CD8-positive, alpha-beta T cell (primary cell): ENCODE measurements at regions of chr7 and their contacts with region 1.

Region 1: GRCh38 chr7:3042861-3043489 is 692 bp downstream of the CARD11 start:
- DNase-seq: peak; percentile 20 to 82 (median 73)
- ATAC-seq: peak; percentile 61
- H3K4me3 ChIP-seq: peak overlapping the region; percentile 84 to 96
- H3K4me3 Mint-ChIP-seq: peak overlapping the region; percentile 92
- H3K27ac ChIP-seq: peak overlapping the region; percentile 84 to 88
- H3K27ac Mint-ChIP-seq: peak overlapping the region; percentile 94
- H3K4me1 ChIP-seq: peaks cover 49% of the 10 kb centered on the region
- H3K4me1 Mint-ChIP-seq: peaks cover 59% of the 10 kb centered on the region
- H3K27me3 ChIP-seq: no peaks in the 10 kb centered on the region
- H3K27me3 Mint-ChIP-seq: no peaks in the 10 kb centered on the region
- CTCF ChIP-seq: no peak

Region 2: DNA sequence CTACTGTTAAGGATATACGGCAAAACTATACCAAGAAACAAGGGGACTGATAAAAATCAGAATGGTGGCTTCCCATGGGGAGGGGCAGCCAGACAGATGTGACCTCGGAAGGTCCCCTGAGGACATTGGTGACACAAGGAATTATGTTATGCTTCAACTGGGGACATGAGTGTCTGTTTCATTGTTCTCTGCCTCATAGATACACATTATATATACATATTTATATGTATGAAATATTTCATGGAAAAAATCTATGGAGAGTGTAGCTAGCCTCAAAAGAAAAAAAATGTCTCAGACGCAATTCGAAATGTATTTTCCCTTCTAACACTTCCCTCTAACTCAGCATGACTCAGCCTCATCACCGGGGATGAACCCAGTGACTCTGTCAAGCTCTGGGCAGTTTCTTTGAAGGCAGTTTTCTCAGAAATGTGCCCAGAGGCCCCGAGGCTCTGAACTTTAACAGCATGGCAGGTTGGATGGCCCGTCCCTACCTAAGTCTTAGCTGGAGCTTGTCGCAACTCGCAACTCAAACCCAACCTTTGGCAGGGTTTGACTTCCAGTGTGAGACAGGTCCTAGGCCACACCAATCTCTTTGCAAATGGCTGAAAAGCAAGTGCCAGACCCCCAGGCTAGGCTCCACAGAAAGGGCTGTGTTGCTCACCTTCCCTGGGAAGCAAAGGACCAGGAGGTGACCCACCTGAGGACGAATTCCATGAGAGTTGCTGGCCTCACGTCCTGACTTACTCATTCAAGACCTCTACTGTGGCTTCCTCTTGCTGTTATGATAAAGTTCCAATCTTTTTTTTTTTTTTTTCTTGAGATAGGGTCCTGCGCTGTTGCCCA is 86.2 kb before region 1 on chr7:
- CTCF ChIA-PET with region 1: interaction called, 3 read pairs
- POLR2A ChIA-PET with region 1: no interaction called
- intact Hi-C with region 1: loop called in 1 of 2 experiments (anchors 1 kb)
- DNase-seq: peak in 4 of 9 experiments; percentile 20 to 57 (median 43)
- ATAC-seq: peak; percentile 33
- H3K4me3 ChIP-seq: no peak overlapping the region
- H3K4me3 Mint-ChIP-seq: no peak overlapping the region
- H3K27ac ChIP-seq: peak overlapping the region; percentile 10 to 60
- H3K27ac Mint-ChIP-seq: peak overlapping the region; percentile 72
- H3K4me1 ChIP-seq: peaks cover 53% of the 10 kb centered on the region
- H3K4me1 Mint-ChIP-seq: peaks cover 63% of the 10 kb centered on the region
- H3K27me3 ChIP-seq: no peaks in the 10 kb centered on the region
- H3K27me3 Mint-ChIP-seq: no peaks in the 10 kb centered on the region
- CTCF ChIP-seq: no peak

Region 3: GRCh38 chr7:2978403-2978802 is 64.6 kb before region 1 on chr7:
- CTCF ChIA-PET with region 1: no interaction called
- POLR2A ChIA-PET with region 1: interaction called, 5 read pairs
- intact Hi-C with region 1: loop called (anchors 2 kb)
- DNase-seq: peak; percentile 19 to 90 (median 71)
- ATAC-seq: peak; percentile 62
- H3K4me3 ChIP-seq: peak overlapping the region; percentile 40
- H3K4me3 Mint-ChIP-seq: peak overlapping the region; percentile 85
- H3K27ac ChIP-seq: peak overlapping the region; percentile 34 to 81
- H3K27ac Mint-ChIP-seq: peak overlapping the region; percentile 95
- H3K4me1 ChIP-seq: peaks cover 60% of the 10 kb centered on the region
- H3K4me1 Mint-ChIP-seq: peaks cover 70% of the 10 kb centered on the region
- H3K27me3 ChIP-seq: no peaks in the 10 kb centered on the region
- H3K27me3 Mint-ChIP-seq: no peaks in the 10 kb centered on the region
- CTCF ChIP-seq: no peak

Region 4: DNA sequence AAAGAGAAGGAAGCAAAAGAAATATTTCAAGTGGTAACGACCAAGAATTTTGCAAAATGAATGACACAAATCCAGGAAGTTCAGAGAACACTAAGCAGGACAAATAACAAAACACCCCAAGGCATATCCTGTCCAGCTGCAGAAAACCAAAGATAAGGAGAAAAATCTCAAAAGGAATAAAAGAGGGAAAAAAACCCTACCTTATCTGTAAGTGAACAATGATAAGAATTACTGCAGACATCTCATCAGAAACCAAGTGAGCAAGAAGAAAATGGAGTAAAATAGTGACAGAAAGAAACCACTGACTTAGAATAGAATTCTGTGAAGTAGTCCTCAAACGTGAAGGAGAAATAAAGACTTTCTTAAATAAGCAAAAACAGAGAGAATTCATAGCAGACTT is 21.1 kb before region 1 on chr7:
- CTCF ChIA-PET with region 1: no interaction called
- POLR2A ChIA-PET with region 1: no interaction called
- intact Hi-C with region 1: loop called in 1 of 2 experiments (anchors 2 kb)
- DNase-seq: no peak
- ATAC-seq: no peak
- H3K4me3 ChIP-seq: no peak overlapping the region
- H3K4me3 Mint-ChIP-seq: no peak overlapping the region
- H3K27ac ChIP-seq: no peak overlapping the region
- H3K27ac Mint-ChIP-seq: peak overlapping the region; percentile 53
- H3K4me1 ChIP-seq: no peaks in the 10 kb centered on the region
- H3K4me1 Mint-ChIP-seq: peaks cover 49% of the 10 kb centered on the region
- H3K27me3 ChIP-seq: no peaks in the 10 kb centered on the region
- H3K27me3 Mint-ChIP-seq: no peaks in the 10 kb centered on the region
- CTCF ChIP-seq: no peak

Region 5: GRCh38 chr7:3056234-3057065 is 13.5 kb after region 1 on chr7:
- CTCF ChIA-PET with region 1: interaction called, 11 read pairs
- POLR2A ChIA-PET with region 1: interaction called, 3 read pairs
- intact Hi-C with region 1: no loop called
- DNase-seq: no peak
- ATAC-seq: no peak
- H3K4me3 ChIP-seq: no peak overlapping the region
- H3K4me3 Mint-ChIP-seq: no peak overlapping the region
- H3K27ac ChIP-seq: no peak overlapping the region
- H3K27ac Mint-ChIP-seq: no peak overlapping the region
- H3K4me1 ChIP-seq: no peaks in the 10 kb centered on the region
- H3K4me1 Mint-ChIP-seq: no peaks in the 10 kb centered on the region
- H3K27me3 ChIP-seq: no peaks in the 10 kb centered on the region
- H3K27me3 Mint-ChIP-seq: no peaks in the 10 kb centered on the region
- CTCF ChIP-seq: no peak

Region 6: GRCh38 chr7:3092468-3092867 is 49.5 kb after region 1 on chr7:
- CTCF ChIA-PET with region 1: interaction called, 4 read pairs
- POLR2A ChIA-PET with region 1: no interaction called
- intact Hi-C with region 1: loop called (anchors 2 kb)
- DNase-seq: peak; percentile 33 to 94 (median 73)
- ATAC-seq: peak; percentile 82
- H3K4me3 ChIP-seq: peak overlapping the region; percentile 15 to 31
- H3K4me3 Mint-ChIP-seq: peak overlapping the region; percentile 55
- H3K27ac ChIP-seq: peak overlapping the region; percentile 56 to 96
- H3K27ac Mint-ChIP-seq: peak overlapping the region; percentile 96
- H3K4me1 ChIP-seq: peaks cover 74% of the 10 kb centered on the region
- H3K4me1 Mint-ChIP-seq: peaks cover 74% of the 10 kb centered on the region
- H3K27me3 ChIP-seq: no peaks in the 10 kb centered on the region
- H3K27me3 Mint-ChIP-seq: no peaks in the 10 kb centered on the region
- CTCF ChIP-seq: no peak

Region 7: DNA sequence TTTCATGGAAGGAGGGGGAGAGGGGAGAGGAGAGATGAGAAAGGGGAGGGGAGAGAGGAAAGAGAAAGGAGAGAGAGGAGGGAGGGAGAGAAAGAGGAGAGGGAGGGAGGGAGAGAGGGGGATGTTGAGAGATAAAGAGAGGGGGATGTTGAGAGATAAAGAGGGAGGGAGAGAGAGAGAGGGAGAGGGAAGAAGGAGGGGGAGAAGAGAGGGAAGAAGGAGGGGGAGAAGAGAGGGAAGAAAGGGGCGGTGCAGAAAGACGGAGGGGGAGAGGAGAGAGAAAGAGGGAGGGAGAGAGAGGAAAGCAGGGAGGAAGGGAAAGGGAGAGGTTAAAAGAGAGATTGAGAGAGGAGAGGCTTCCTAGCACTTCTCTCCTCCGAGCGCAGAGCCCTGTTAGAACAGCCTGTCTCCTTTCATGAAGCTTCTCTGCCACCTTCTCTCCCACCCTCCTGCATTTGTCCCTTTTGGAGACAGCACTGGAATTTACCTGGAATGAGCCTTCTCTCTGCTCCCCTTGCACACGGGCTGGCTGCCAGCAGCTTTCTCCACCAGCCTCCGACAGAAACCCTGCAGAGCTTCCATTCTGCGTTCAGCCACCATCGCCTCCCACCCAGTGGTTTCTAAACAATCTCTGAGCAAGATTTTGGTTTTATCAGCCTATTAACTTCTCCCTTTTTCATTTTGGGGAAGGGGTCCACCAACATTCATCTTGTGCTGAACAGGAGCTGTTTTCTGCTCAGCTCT is 74.7 kb after region 1 on chr7:
- CTCF ChIA-PET with region 1: no interaction called
- POLR2A ChIA-PET with region 1: interaction called, 3 read pairs
- intact Hi-C with region 1: loop called in 1 of 2 experiments (anchors 5 kb)
- DNase-seq: peak in 4 of 9 experiments; percentile 35 to 69 (median 51)
- ATAC-seq: peak; percentile 54
- H3K4me3 ChIP-seq: peak overlapping the region in 1 of 2 experiments; percentile 40
- H3K4me3 Mint-ChIP-seq: peak overlapping the region; percentile 90
- H3K27ac ChIP-seq: peak overlapping the region in 1 of 2 experiments; percentile 4
- H3K27ac Mint-ChIP-seq: peak overlapping the region; percentile 97
- H3K4me1 ChIP-seq: peaks cover 61% of the 10 kb centered on the region
- H3K4me1 Mint-ChIP-seq: peaks cover 79% of the 10 kb centered on the region
- H3K27me3 ChIP-seq: no peaks in the 10 kb centered on the region
- H3K27me3 Mint-ChIP-seq: no peaks in the 10 kb centered on the region
- CTCF ChIP-seq: no peak

Region 8: GRCh38 chr7:4797858-4798705 is 1755.1 kb after region 1 on chr7:
- CTCF ChIA-PET with region 1: no interaction called
- POLR2A ChIA-PET with region 1: no interaction called
- intact Hi-C with region 1: no loop called
- DNase-seq: peak; percentile 27 to 76 (median 59)
- ATAC-seq: peak; percentile 93
- H3K4me3 ChIP-seq: no peak overlapping the region
- H3K4me3 Mint-ChIP-seq: no peak overlapping the region
- H3K27ac ChIP-seq: no peak overlapping the region
- H3K27ac Mint-ChIP-seq: no peak overlapping the region
- H3K4me1 ChIP-seq: peaks cover under 1% of the 10 kb centered on the region
- H3K4me1 Mint-ChIP-seq: peaks cover 3% of the 10 kb centered on the region
- H3K27me3 ChIP-seq: no peaks in the 10 kb centered on the region
- H3K27me3 Mint-ChIP-seq: no peaks in the 10 kb centered on the region
- CTCF ChIP-seq: peak; percentile 99